ENCODE measurements at regions of chr6 and their contacts with region 1.

Region 1: GRCh38 chr6:122839477-122839876 is 50.4 kb downstream of the SMPDL3A start:
- DNase-seq: peak; percentile 31 to 54
- ATAC-seq: peak; percentile 83

Region 2: GRCh38 chr6:122730775-122731386 is 108.6 kb before region 1 on chr6:
- intact Hi-C with region 1: loop called in 1 of 2 experiments (anchors 5 kb)
- DNase-seq: no peak
- ATAC-seq: peak; percentile 59